ENCODE measurements at regions of chr17 and their contacts with region 1.

Region 1: GRCh38 chr17:44376124-44376523 is 12.5 kb upstream of the FAM171A2 start:
- DNase-seq: peak; percentile 58
- ATAC-seq: peak; percentile 49
- H3K4me3 Mint-ChIP-seq: no peak overlapping the region
- H3K27ac Mint-ChIP-seq: no peak overlapping the region
- H3K4me1 Mint-ChIP-seq: no peaks in the 10 kb centered on the region
- H3K27me3 Mint-ChIP-seq: peaks cover 9% of the 10 kb centered on the region
- CTCF ChIP-seq: peak; percentile 49

Region 2: DNA sequence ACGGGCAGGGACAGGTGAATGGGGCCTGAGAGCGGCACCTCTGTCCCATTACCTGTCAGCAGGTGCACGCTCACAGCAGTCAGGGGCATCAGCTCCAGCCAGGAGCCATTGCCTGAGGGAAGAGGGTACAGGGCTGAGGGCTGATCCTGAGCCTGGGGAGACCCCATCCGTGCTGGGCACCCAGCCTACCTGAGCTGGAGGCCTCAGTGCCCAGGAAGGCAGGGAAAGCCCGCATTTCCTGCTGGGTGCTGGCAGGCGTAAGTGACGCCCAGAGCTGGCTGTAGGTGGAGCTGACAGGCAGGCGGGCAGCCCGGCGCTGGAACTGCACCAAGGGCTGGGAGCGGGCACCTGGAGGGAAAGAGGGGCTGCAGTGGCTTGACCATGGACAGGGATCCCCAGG is 19.9 kb before region 1 on chr17:
- CTCF ChIA-PET with region 1: interaction called, 39 read pairs
- POLR2A ChIA-PET with region 1: no interaction called
- intact Hi-C with region 1: no loop called
- DNase-seq: no peak
- ATAC-seq: no peak
- H3K4me3 Mint-ChIP-seq: no peak overlapping the region
- H3K27ac Mint-ChIP-seq: no peak overlapping the region
- H3K4me1 Mint-ChIP-seq: no peaks in the 10 kb centered on the region
- H3K27me3 Mint-ChIP-seq: no peaks in the 10 kb centered on the region
- CTCF ChIP-seq: no peak